Body of pancreas (tissue), 4 donors: ENCODE measurements at regions of chr10 and their contacts with region 1.

Region 1: GRCh38 chr10:75019370-75019769 is 92.1 kb upstream of the SAMD8 start:
- DNase-seq: no peak
- ATAC-seq: no peak
- H3K4me3 ChIP-seq: no peak overlapping the region
- H3K27ac ChIP-seq: no peak overlapping the region
- H3K4me1 ChIP-seq: peaks cover 56% of the 10 kb centered on the region
- H3K27me3 ChIP-seq: no peaks in the 10 kb centered on the region
- CTCF ChIP-seq: peak in 5 of 7 experiments; percentile 12 to 55 (median 41)
- POLR2A ChIP-seq: no peak

Region 2: DNA sequence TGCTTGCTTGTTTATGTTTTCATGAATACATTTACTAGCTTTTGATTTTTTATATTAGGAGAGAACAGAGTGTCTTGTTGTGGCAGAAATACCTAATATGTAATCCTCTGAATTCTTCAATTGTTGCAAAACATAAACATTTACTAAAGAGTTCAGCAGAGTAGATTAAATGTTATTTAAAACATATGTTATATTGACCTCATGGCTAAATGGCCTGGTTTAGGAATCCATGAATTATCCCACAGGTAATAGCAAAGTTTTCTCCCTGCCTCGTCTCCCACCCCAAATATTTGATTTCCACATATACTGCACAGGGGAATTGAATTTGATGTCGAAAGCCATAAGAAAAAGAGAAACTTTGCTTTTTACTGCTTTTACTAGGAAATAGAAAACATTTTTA is 756.5 kb before region 1 on chr10:
- intact Hi-C with region 1: loop called (anchors 5 kb)
- DNase-seq: no peak
- ATAC-seq: no peak
- H3K4me3 ChIP-seq: no peak overlapping the region
- H3K27ac ChIP-seq: no peak overlapping the region
- H3K4me1 ChIP-seq: no peaks in the 10 kb centered on the region
- H3K27me3 ChIP-seq: no peaks in the 10 kb centered on the region
- CTCF ChIP-seq: no peak
- POLR2A ChIP-seq: no peak

Region 3: GRCh38 chr10:74900297-74900696 is 119.1 kb before region 1 on chr10:
- intact Hi-C with region 1: loop called (anchors 10 kb)
- DNase-seq: no peak
- ATAC-seq: no peak
- H3K4me3 ChIP-seq: no peak overlapping the region
- H3K27ac ChIP-seq: no peak overlapping the region
- H3K4me1 ChIP-seq: peaks cover 42% of the 10 kb centered on the region
- H3K27me3 ChIP-seq: no peaks in the 10 kb centered on the region
- CTCF ChIP-seq: no peak
- POLR2A ChIP-seq: no peak